Psoas muscle (tissue), 8 donors: ENCODE measurements at regions of chr3 and their contacts with region 1.

Region 1: GRCh38 chr3:141050576-141051442 is at the start of gene SPSB4:
- DNase-seq: peak; percentile 81 to 93
- ATAC-seq: peak; percentile 94 to 98 (median 96)
- H3K4me3 ChIP-seq: peak within 1 kb of the TSS; percentile 66
- H3K27ac ChIP-seq: peak within 1 kb of the TSS; percentile 68
- H3K4me1 ChIP-seq: peaks cover 8% of the 10 kb centered on the region
- H3K27me3 ChIP-seq: peaks cover 0 to 12% (median 0%) of the 10 kb centered on the region in 3 donors
- CTCF ChIP-seq: peak; percentile 63
- total RNA-seq, gene SPSB4: 0.40 to 1.9 (median 0.59) TPM

Region 2: DNA sequence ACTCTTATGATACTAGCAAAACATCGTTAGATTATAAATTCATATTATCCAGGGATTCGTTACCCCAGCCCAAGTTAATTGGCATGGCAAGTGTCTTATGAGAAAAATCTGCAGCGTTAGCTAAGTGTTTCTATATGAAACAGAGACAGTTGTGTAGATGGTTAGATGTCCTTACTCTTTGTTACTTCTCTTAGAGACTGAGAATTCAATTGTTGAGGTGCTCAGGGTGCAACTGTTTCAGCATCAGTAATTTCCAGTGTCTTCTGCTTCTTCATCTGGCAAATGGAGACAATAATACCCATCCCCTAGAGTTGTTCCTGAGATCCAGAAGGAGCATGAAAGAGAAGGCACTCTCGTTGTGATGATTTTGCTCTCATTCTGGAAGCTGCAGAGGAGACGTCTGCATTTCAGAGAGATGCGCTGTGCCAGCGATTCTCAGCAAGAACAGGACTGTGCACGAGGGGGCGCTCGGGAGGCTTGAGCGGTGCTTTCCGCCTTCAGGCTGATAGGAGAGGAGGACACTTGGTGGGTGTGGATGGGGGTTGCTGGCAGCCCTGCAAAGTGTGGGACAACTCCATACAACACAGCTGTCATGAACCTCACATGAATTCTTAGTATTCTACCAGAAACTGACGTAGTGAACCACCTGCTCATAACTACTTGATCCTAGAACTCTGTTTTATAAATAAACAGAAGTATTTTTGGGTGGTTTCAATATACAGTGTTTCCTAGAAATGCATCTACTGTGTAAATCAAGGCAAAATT is 39.4 kb before region 1 on chr3:
- intact Hi-C with region 1: loop called in 1 of 2 experiments (anchors 5 kb)
- DNase-seq: peak; percentile 82 to 90
- ATAC-seq: peak; percentile 77 to 89 (median 87)
- H3K4me3 ChIP-seq: no peak overlapping the region
- H3K27ac ChIP-seq: no peak overlapping the region
- H3K4me1 ChIP-seq: peaks cover 6% of the 10 kb centered on the region
- H3K27me3 ChIP-seq: no peaks in the 10 kb centered on the region
- CTCF ChIP-seq: peak; percentile 73